ENCODE measurements at regions of chr15 and their contacts with region 1.

Region 1: DNA sequence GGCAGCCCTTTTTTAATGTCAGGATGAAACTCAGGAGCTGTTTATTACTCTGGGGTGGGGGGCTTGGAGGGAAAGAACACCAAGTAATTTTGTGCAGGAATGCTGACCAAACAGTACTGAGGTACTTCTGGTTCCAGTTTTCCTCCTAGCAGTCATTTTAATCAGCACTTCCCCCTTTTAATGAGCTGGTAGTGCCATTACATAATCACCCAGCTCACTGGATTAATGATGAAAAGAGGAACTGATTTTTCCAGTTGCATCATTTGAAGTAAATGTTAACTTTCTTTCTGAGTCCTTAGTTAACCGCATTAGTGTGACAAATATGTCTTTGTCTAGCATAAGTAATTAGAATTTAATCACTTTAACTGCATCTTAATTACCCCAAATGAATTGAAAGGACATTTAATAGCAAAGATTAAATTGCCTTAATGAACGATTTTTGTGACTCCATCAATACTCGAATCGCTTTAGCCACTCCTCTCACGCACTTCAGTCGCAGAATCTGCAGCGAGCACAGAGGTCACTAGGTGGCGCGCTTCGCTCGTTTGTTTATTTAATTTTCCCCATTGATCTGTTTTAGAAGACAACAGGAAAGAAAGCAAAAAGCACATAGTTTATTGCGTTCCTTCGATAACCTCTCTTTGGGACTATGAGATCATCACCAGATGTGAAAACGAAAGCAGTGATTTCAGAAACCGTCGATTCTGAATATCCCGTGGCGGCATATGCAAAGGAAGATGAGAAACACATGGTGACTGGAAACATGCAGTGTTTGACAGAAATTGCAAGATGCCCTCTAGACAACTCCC is 9.8 kb downstream of the ONECUT1 start:
- DNase-seq: peak; percentile 71
- H3K4me3 ChIP-seq: peak overlapping the region; percentile 41
- H3K27ac ChIP-seq: no peak overlapping the region
- H3K4me1 ChIP-seq: peaks cover 11% of the 10 kb centered on the region
- CTCF ChIP-seq: peak; percentile 100

Region 2: GRCh38 chr15:52677593-52678467 is 102.5 kb before region 1 on chr15:
- CTCF ChIA-PET with region 1: no interaction called
- POLR2A ChIA-PET with region 1: no interaction called
- intact Hi-C with region 1: no loop called
- DNase-seq: peak; percentile 76
- H3K4me3 ChIP-seq: peak overlapping the region; percentile 80
- H3K27ac ChIP-seq: peak overlapping the region; percentile 99
- H3K4me1 ChIP-seq: peaks cover 71% of the 10 kb centered on the region
- CTCF ChIP-seq: peak; percentile 70

Region 3: DNA sequence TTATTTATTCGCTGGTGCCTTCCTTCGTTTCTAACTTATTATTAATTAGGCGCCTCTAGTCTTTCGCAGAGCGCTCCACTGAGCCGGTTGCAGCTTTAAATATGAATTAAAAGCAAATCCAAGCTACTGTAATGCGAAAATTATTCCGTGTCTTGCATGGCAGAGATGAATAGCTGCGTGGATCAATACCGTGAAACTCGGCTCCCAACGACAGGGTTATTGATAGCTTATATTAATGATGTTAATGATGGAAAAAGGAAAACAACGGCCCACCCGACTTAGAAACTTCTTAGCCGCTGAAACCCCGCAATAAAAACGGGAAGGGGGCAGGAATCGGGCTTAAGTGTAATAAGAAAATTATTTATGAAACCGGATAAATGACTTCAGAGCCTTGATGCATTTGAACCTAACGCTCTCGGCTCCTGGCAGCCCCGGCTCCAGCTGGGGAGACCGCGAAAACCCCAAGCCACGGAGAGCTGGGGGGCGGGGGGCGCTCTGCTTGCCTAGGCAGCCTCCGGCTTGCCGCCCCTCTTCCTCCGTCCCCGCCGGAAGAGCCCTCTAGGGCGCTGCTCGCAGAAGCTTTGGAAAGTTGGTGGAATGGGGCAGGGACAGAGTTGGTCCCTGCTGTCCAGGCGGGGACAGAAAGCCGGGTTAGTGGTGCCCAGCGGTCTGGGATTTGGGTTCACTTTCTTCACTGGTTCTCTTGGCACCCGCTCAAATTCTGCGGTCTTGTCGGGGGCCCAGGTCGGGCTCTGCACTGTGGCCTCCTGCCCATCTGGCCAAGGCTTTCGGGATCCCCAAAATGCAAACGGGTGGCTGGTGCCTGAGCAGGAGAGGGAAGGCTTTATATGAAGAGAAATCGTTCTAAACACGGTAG is 17.5 kb after region 1 on chr15:
- CTCF ChIA-PET with region 1: no interaction called
- POLR2A ChIA-PET with region 1: no interaction called
- intact Hi-C with region 1: no loop called
- DNase-seq: no peak
- H3K4me3 ChIP-seq: no peak overlapping the region
- H3K27ac ChIP-seq: no peak overlapping the region
- H3K4me1 ChIP-seq: no peaks in the 10 kb centered on the region
- CTCF ChIP-seq: no peak

Region 4: DNA sequence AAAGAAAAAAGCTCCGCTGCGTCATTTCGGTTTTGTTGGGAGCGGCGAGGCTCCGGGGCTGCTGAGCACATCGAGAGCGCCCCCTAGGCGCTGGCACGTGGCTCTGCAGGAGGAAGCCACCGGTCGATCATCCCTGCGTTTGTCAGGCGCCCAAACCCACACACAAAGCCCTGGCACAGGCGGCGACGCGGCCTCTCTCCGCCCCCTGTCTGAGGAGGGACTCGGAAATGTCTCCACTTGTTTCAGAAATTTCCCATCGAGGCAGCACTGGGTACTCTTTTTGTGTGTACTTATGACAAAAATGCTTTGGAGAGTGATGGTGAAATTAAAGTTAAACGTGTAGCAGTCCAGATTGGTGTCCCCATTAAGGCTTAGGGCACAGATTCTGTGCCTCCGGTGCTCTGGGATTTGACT is 417.1 kb after region 1 on chr15:
- CTCF ChIA-PET with region 1: no interaction called
- POLR2A ChIA-PET with region 1: no interaction called
- intact Hi-C with region 1: loop called (anchors 2 kb)
- DNase-seq: peak; percentile 37
- H3K4me3 ChIP-seq: no peak overlapping the region
- H3K27ac ChIP-seq: no peak overlapping the region
- H3K4me1 ChIP-seq: no peaks in the 10 kb centered on the region
- CTCF ChIP-seq: peak; percentile 90

Region 5: DNA sequence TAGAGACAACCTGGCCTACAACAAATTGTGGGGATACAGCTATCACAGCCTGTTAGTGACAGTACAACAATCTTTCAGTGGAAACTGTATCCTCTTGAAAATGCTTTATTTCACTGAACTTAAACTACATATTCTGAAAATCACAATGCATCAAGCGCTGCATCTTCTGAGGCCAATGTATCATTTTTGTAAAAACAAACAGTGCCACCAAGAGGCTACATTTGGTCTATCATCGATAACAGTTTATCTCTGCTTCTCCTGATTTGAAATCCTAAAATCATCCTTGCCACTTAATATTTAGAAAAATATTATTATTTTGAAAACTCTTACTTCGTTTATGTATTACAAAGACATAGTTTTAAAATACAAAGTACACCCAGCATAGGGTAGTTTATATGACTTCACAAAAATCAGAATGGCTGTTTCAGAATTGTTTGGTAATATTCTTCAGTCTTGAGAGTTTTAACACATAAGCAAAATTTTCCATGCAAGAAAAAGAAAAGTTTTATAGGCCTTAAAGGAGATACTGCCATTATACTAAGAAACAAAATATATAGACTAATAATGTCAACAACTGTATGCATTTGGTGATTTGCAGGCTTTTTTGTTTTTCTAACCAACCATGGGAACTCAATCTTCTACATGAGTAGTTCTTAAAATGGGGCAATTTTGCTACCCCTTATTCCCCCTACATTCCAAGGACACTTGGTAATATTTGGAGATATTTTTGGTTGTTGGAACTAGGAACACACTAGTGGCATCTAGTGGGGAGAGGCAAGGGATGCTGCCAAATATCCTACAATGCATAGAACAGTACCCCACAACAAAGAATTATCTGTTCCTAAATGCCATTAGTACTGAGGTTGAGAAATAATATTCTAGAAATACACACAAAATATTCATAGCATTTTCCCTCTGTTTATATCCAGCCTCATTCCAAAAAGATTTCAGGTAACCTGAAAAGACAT is 936.8 kb after region 1 on chr15:
- CTCF ChIA-PET with region 1: no interaction called
- POLR2A ChIA-PET with region 1: no interaction called
- intact Hi-C with region 1: loop called (anchors 5 kb)
- DNase-seq: peak; percentile 15
- H3K4me3 ChIP-seq: no peak overlapping the region
- H3K27ac ChIP-seq: no peak overlapping the region
- H3K4me1 ChIP-seq: no peaks in the 10 kb centered on the region
- CTCF ChIP-seq: peak; percentile 76